WTC11 (cell line): ENCODE measurements at regions of chr15 and their contacts with region 1.

Region 1: GRCh38 chr15:34109797-34110663 is 8.1 kb downstream of the PGBD4 start:
- DNase-seq: no peak
- ATAC-seq: peak; percentile 73
- H3K4me3 Mint-ChIP-seq: no peak overlapping the region
- H3K27ac Mint-ChIP-seq: no peak overlapping the region
- H3K4me1 Mint-ChIP-seq: peaks cover 6% of the 10 kb centered on the region
- H3K27me3 Mint-ChIP-seq: no peaks in the 10 kb centered on the region
- CTCF ChIP-seq: peak; percentile 49; the same call in 1 of the 2 replicates

Region 2: GRCh38 chr15:33994005-33994615 is 115.9 kb before region 1 on chr15:
- CTCF ChIA-PET with region 1: no interaction called
- POLR2A ChIA-PET with region 1: no interaction called
- DNase-seq: peak; percentile 60
- ATAC-seq: peak; percentile 91
- H3K4me3 Mint-ChIP-seq: no peak overlapping the region
- H3K27ac Mint-ChIP-seq: no peak overlapping the region
- H3K4me1 Mint-ChIP-seq: no peaks in the 10 kb centered on the region
- H3K27me3 Mint-ChIP-seq: no peaks in the 10 kb centered on the region
- CTCF ChIP-seq: 0 out of 2 replicates have a peak, but pooled peaks have one; percentile 22

Region 3: DNA sequence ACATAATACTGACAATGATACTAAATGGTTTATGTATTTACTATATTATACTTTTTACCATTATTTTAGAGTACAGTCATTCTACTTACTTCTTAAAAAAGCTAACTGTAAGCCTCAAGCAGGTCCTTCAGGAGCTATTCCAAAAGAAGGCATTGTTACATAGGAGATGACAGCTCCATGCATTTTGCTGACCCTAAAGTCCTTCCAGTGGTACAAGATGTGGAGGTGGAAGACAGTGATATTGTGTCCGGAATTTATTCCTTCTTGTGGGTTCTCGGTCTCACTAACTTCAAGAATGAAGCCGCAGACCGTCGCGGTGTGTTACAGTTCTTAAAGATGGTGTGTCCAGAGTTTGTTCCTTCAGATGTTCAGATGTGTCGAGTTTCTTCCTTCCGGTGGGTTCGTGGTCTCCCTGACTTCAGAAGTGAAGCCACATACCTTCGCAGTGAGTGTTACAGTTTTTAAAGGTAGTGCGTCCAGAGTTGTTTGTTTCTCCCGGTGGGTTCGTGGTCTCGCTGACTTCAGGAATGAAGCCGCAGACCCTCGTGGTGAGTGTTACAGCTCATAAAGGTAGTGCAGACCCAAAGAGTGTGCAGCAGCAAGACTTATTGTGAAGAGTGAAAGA is 91.9 kb before region 1 on chr15:
- CTCF ChIA-PET with region 1: no interaction called
- POLR2A ChIA-PET with region 1: no interaction called
- DNase-seq: no peak
- ATAC-seq: no peak
- H3K4me3 Mint-ChIP-seq: no peak overlapping the region
- H3K27ac Mint-ChIP-seq: no peak overlapping the region
- H3K4me1 Mint-ChIP-seq: peaks cover 32% of the 10 kb centered on the region
- H3K27me3 Mint-ChIP-seq: no peaks in the 10 kb centered on the region
- CTCF ChIP-seq: no peak

Region 4: GRCh38 chr15:34132881-34133280 is 22.9 kb after region 1 on chr15:
- CTCF ChIA-PET with region 1: interaction called, 10 read pairs
- POLR2A ChIA-PET with region 1: no interaction called
- DNase-seq: no peak
- ATAC-seq: no peak
- H3K4me3 Mint-ChIP-seq: no peak overlapping the region
- H3K27ac Mint-ChIP-seq: no peak overlapping the region; the same call in 1 of the 2 replicates
- H3K4me1 Mint-ChIP-seq: no peaks in the 10 kb centered on the region
- H3K27me3 Mint-ChIP-seq: no peaks in the 10 kb centered on the region
- CTCF ChIP-seq: no peak

Region 5: DNA sequence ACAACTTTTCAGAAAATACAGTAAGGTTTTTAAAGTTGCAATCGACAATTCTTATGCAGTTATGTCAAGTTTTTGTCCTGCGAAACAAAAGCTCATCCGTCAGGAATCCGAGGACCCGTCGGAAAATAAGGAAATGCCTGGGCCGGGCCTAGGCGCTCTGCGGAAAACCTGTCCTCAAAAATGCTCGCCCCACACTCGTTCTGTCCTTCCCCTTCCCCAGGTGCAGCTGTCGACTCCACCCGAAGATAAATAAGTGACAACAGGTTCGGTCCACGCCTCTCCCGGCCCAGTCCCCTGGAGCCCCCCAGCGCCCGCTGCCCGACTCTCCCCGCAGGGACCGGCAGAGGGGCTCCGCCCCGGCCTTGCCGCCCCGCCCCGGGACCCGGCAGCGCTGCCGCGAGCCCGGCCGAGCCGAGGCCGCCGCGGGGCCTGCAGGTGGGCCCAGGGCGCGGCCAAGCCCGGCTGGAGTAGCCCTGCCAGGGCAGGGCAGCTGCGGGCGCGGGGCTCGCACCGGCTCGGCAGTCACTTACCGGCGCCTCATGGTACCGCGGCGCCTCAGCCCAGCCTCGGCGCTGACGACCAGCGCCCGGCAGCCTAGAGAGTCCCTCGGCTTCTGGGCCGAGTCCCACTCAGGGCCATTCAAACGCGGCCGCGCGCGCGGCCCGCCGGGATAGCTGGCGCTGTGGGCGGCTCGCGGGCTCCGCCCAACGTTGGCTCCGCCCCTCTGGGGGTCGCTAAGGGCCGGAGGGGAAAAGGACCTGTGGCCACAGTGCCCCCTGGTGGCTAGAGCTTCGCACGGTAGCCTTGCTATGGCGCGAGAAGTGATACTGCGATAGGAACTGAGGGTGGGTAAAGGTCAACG is 99.6 kb after region 1 on chr15 and contains the start of gene KATNBL1:
- CTCF ChIA-PET with region 1: interaction called, 70 read pairs
- POLR2A ChIA-PET with region 1: interaction called, 5 read pairs
- DNase-seq: peak; percentile 99
- ATAC-seq: peak; percentile 79
- H3K4me3 Mint-ChIP-seq: peak within 1 kb of the TSS; percentile 87
- H3K27ac Mint-ChIP-seq: peak within 1 kb of the TSS; percentile 83
- H3K4me1 Mint-ChIP-seq: peaks cover 40% of the 10 kb centered on the region
- H3K27me3 Mint-ChIP-seq: no peaks in the 10 kb centered on the region
- CTCF ChIP-seq: peak; percentile 89
- total RNA-seq, gene KATNBL1: 41.8 to 45.8 TPM (median 43.2 TPM) in 3 replicates

Region 6: GRCh38 chr15:34337557-34338306 is 227.7 kb after region 1 on chr15 and contains the start of gene SLC12A6:
- CTCF ChIA-PET with region 1: interaction called, 16 read pairs
- POLR2A ChIA-PET with region 1: no interaction called
- DNase-seq: peak; percentile 91
- ATAC-seq: peak; percentile 91
- H3K4me3 Mint-ChIP-seq: peak within 1 kb of the TSS; percentile 97
- H3K27ac Mint-ChIP-seq: peak within 1 kb of the TSS; percentile 95
- H3K4me1 Mint-ChIP-seq: peaks cover 22% of the 10 kb centered on the region
- H3K27me3 Mint-ChIP-seq: peaks cover 6% of the 10 kb centered on the region
- CTCF ChIP-seq: no peak
- total RNA-seq, gene SLC12A6: 13.3 to 16.2 TPM (median 14.7 TPM) in 3 replicates

Region 7: GRCh38 chr15:34367101-34368081 is 257.4 kb after region 1 on chr15 and contains the start of gene LPCAT4:
- CTCF ChIA-PET with region 1: interaction called, 11 read pairs
- POLR2A ChIA-PET with region 1: no interaction called
- DNase-seq: peak; percentile 86
- ATAC-seq: peak; percentile 77
- H3K4me3 Mint-ChIP-seq: peak within 1 kb of the TSS; percentile 96
- H3K27ac Mint-ChIP-seq: peak within 1 kb of the TSS; percentile 95
- H3K4me1 Mint-ChIP-seq: peaks cover 17% of the 10 kb centered on the region
- H3K27me3 Mint-ChIP-seq: no peaks in the 10 kb centered on the region; the same call in 1 of the 2 replicates
- CTCF ChIP-seq: peak; percentile 40
- total RNA-seq, gene LPCAT4: 68.6 to 97.2 TPM (median 70.6 TPM) in 3 replicates

Region 8: DNA sequence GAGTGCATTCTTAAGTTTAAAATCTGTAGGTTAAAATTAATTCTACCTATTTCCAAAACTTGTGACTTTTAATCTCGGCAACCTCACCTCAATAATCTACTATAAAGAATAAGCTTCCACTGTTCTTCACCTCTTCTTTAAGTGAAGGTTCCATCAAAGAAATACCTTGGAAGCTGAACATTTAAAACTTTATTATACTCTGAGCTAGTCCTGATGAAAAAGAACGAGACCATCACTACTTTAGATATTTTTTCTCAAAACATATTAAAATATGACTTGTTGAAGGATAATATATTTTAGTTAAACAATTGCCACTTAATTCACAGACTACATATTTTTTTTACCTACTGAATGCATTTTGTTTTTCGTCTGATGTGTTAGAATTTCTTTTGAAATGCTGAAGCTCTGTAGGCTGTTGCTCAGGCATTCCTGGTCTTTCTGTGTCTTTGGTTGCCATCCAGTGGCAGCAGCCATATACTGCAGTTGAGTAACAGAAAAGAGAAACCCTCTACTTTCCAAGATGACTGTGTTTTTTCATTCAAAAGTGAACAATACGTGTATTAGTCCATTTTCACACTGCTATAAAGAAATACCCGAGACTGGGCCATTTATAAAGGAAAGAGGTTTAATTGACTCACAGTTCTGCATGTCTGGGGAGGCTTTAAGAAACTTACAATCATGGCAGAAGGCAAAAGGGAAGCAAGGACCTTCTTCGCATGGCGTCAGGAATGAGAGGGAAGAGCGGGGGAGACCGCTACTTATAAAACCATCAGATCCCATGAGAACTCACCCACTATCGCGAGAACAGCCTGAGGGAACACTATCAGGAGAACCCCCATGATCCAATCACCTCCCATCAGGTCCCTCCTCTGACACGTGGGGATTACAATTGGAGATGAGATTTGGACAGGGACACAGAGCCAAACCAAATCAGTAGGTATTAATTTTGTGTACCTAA is 478.0 kb after region 1 on chr15:
- CTCF ChIA-PET with region 1: interaction called, 27 read pairs
- POLR2A ChIA-PET with region 1: no interaction called
- DNase-seq: peak; percentile 60
- ATAC-seq: peak; percentile 61
- H3K4me3 Mint-ChIP-seq: peak overlapping the region; percentile 59
- H3K27ac Mint-ChIP-seq: peak overlapping the region; percentile 94
- H3K4me1 Mint-ChIP-seq: peaks cover 24% of the 10 kb centered on the region
- H3K27me3 Mint-ChIP-seq: peaks cover 19% of the 10 kb centered on the region
- CTCF ChIP-seq: peak; percentile 31; the same call in 1 of the 2 replicates